HEK293T (cell line): ENCODE measurements at regions of chr19 and their contacts with region 1.

Region 1: GRCh38 chr19:17405250-17406038 is at the start of gene BST2:
- DNase-seq: peak; percentile 6

Region 2: DNA sequence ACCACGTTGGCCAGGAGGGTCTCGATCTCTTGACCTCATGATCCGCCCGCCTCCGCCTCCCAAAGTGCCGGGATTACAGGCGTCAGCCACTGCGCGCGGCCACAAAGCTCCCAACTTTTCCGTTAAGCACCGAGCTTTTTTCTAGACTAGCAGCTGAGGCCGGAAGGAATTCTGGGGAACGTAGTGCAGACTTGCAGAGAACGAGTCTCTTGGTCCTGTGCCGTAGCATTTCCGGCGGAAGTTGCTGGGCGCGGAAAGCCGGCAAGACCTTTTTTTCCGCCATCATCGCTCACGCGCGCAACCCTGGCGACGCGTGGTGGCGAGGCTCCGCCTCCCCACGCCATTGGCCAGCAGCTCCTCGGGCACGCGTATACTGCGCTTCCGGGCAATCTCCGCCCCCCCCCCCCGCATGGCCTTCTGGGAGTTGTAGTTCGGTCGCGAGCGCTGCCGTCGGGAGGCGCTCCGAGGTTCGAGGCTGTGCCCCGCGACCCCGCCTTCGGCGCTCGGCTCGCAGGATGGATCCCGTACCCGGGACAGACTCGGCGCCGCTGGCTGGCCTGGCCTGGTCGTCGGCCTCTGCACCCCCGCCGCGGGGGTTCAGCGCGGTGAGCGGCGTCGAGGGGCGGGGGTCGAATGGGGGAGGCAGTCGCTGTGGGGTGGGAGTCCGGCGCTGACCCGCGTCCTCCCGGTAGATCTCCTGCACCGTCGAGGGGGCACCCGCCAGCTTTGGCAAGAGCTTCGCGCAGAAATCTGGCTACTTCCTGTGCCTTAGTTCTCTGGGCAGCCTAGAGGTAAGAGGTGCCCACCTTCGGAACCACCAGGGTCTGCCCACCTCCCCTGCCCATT is 14.4 kb after region 1 on chr19 and contains the start of gene MVB12A:
- CTCF ChIA-PET with region 1: interaction called, 4 read pairs
- POLR2A ChIA-PET with region 1: interaction called, 25 read pairs
- DNase-seq: peak; percentile 98

Region 3: DNA sequence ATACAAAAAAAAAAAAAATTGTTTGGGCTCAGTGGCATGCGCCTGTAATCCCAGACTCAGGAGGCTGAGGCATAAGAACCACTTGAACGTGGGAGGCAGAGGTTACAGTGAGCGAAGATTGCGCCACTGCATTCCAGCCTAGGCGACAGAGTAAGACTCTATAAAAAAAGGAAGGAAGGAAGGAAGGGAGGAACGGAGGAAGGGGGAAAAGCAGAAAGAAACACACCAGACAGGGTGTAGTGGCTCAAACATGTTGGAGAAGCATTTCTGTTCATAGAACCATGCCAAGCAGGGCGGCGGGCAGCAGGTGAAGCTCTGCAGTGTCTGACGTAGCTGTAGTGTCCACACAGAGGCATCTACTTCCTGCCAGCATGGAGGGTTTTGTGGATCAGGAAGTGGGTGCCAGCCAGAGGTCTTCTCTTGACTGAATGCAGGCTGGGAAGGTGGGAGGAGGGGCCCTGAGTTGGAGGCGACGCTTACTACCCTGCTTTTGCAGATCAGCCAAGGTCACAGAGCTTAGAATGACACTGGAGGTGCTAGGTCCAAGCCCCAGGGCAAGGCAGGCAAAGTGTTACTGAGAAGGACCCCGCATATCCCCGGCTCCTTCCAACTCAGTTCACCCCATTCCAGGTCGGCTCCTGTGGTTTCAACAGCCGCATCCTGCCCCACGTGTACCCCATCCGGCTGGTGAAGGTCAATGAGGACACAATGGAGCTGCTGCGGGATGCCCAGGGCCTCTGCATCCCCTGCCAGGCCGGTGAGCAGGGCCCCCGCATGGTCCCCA is 94.4 kb after region 1 on chr19:
- CTCF ChIA-PET with region 1: no interaction called
- POLR2A ChIA-PET with region 1: no interaction called
- DNase-seq: no peak